HepG2 (cell line): ENCODE measurements at regions of chr17 and their contacts with region 1.

Region 1: DNA sequence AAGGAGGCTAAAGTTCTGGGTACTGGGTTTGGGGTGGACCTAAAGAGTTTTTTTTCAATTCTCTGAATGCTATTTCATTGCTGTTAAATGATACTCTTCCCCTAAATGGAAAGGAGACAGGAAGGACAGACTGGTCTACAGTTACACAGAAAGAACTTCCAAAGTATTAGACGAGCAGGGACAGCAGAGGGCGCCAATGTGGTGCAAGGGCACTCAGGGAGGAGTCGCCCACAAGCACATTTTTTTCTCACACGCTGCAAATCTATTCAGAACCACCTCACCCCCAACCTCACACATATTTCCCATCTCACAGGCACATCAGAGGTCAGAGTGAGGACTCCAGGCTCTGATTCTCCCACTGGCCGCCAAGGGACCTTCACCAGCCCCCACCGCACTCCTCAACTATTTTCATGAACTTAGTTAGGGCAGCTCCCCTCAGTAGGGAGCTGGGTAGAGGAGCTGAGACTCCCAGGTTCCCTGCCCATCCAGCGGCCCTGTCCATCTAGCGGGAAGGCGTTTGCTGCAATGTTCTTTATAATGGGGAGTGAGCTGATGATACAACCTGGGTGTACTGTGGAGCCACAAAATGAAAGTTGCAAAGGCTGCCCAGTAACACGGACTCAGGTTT is 6.8 kb upstream of the CA4 start:
- DNase-seq: peak; percentile 83
- ATAC-seq: peak; percentile 82
- H3K4me3 ChIP-seq: peak overlapping the region in 2 of 3 experiments; percentile 23 to 56; a peak in 3 of 6 replicates
- H3K27ac ChIP-seq: no peak overlapping the region
- H3K4me1 ChIP-seq: peaks cover 28% of the 10 kb centered on the region
- H3K27me3 ChIP-seq: peaks cover 11 to 72% of the 10 kb centered on the region in 2 experiments
- CTCF ChIP-seq: peak; percentile 91
- EP300 ChIP-seq: no peak
- POLR2A ChIP-seq: no peak
- RAD21 ChIP-seq: peak; percentile 91

Region 2: DNA sequence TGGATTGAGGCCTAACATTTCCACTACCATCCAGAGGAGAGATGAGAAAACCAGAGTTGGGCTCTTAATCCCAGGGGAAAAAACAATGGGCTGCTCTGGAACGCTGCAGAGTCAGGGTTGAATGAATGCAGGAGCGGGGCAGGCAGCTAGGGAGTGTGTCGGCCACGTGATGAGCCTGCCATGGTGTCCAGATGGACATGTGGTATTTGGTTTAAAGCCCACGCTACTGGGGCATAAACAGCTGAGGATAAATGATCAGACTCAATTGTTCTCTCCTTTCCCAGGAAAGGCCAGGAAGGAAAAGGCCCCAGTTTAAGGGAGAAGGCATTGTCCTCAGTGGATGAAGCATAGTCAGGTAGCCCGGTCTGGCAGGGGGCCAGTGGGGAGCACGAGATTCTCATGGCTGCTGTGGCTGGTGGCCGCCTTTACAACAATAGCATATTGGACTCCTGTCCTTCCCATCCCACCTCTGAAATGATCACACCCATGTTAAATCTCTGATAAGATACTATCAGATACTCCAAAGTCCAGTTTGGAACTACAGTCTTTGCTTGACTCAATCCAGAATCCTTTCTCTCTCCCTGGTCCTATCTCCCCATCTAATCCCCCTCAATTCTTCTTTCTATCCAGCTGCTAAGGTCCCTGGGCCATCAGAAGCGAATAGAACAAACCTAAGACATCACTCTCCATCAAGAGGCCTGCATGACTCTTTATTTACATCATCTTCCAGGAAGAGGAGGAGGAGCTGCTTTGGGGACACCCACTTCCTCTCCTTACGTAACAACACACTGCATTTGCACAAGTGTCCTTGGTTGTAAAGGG is 27.1 kb after region 1 on chr17:
- CTCF ChIA-PET with region 1: interaction called, 3 read pairs
- POLR2A ChIA-PET with region 1: no interaction called
- in situ Hi-C with region 1: no loop called
- intact Hi-C with region 1: loop called (anchors 2 kb)
- DNase-seq: peak; percentile 35
- ATAC-seq: no peak
- H3K4me3 ChIP-seq: no peak overlapping the region
- H3K27ac ChIP-seq: no peak overlapping the region
- H3K4me1 ChIP-seq: peaks cover 58% of the 10 kb centered on the region
- H3K27me3 ChIP-seq: 0 out of 5 replicates have a peak, but pooled peaks cover 0 to 3% of the 10 kb centered on the region in 2 experiments
- CTCF ChIP-seq: no peak
- EP300 ChIP-seq: no peak
- POLR2A ChIP-seq: no peak
- RAD21 ChIP-seq: no peak

Region 3: DNA sequence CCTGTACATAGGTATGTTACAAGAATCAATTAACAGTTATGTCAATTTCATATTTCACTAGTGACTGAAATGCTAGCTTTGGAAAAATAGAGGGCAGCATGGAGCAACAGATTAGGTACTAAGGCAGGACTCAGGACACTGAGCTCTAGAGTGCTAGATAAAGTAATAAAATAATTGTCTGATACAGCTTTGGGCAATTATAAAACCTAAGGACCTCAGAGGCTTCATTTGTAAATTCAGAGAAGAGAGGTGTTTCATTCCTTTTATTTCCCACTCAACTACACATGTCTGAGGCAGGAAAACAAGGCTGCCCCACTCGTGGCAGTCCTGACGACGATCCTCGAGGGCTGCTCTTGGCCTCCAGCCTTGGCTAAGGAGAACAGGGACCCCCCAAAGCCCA is 88.2 kb after region 1 on chr17:
- CTCF ChIA-PET with region 1: no interaction called
- POLR2A ChIA-PET with region 1: no interaction called
- in situ Hi-C with region 1: no loop called
- intact Hi-C with region 1: loop called (anchors 10 kb)
- DNase-seq: peak; percentile 18
- ATAC-seq: peak; percentile 61
- H3K4me3 ChIP-seq: no peak overlapping the region
- H3K27ac ChIP-seq: no peak overlapping the region
- H3K4me1 ChIP-seq: no peaks in the 10 kb centered on the region
- H3K27me3 ChIP-seq: no peaks in the 10 kb centered on the region
- CTCF ChIP-seq: peak; percentile 45
- EP300 ChIP-seq: no peak
- POLR2A ChIP-seq: no peak
- RAD21 ChIP-seq: no peak

Region 4: GRCh38 chr17:60525685-60526514 is 382.9 kb after region 1 on chr17 and contains the start of gene APPBP2:
- CTCF ChIA-PET with region 1: no interaction called
- POLR2A ChIA-PET with region 1: no interaction called
- in situ Hi-C with region 1: no loop called
- intact Hi-C with region 1: loop called (anchors 1 kb)
- DNase-seq: peak; percentile 83
- ATAC-seq: peak; percentile 96
- H3K4me3 ChIP-seq: peak within 1 kb of the TSS; percentile 93 to 98 (median 95)
- H3K27ac ChIP-seq: peak within 1 kb of the TSS; percentile 96
- H3K4me1 ChIP-seq: peaks cover 38% of the 10 kb centered on the region
- H3K27me3 ChIP-seq: peaks cover 0 to 4% of the 10 kb centered on the region in 2 experiments; a peak in 1 of 5 replicates
- CTCF ChIP-seq: 0 out of 2 replicates have a peak, but pooled peaks have one; percentile 19
- EP300 ChIP-seq: peak in 1 of 2 experiments; percentile 28; a peak in 2 of 4 replicates
- POLR2A ChIP-seq: peak; percentile 91 to 94
- RAD21 ChIP-seq: peak; percentile 51
- total RNA-seq, gene APPBP2: 45.8 and 68.8 TPM in 2 replicates